GM18951 (cell line): ENCODE measurements at regions of chr6 and their contacts with region 1.

Region 1: DNA sequence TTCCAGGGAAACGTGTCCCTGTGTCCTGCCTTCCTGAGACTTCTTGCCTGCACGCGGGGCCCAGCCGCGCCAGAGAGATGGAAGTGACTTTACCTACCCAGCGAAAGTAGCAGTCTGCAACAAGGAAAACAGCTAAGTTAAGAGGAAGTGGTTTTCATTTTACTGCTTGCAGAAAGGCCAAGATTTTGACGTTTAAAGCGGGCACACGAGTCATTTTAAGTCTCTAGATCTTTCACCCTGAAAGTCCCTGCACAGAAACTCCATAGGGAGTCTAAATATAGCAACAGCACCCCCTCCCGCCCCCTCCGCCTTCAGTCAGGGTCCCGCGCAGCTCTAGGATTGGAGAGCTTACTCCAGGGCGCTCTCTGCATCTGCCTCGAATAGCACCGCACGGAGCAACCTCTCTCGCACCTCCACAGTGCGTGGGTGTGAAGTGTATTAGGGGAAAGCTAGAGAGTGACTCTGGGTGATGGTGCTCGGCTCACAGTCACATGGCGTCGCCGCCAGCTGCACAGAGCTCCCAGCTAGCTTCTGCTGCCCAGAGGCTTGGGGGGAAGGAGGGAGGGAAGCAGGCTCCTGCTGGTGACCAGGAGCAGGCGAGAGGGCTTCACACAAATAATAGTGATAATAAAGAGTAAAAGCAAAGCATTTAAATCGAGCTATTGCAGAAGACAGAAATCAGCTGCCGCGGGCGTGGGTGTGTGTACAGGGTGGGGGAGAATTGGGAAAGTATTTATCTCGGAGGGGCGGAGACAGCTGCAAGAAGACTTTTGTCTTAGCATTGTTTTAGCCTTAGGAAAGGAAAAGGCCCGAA is 1.8 kb upstream of the KCNQ5 start:
- POLR2A ChIP-seq: peak; percentile 46

Region 2: DNA sequence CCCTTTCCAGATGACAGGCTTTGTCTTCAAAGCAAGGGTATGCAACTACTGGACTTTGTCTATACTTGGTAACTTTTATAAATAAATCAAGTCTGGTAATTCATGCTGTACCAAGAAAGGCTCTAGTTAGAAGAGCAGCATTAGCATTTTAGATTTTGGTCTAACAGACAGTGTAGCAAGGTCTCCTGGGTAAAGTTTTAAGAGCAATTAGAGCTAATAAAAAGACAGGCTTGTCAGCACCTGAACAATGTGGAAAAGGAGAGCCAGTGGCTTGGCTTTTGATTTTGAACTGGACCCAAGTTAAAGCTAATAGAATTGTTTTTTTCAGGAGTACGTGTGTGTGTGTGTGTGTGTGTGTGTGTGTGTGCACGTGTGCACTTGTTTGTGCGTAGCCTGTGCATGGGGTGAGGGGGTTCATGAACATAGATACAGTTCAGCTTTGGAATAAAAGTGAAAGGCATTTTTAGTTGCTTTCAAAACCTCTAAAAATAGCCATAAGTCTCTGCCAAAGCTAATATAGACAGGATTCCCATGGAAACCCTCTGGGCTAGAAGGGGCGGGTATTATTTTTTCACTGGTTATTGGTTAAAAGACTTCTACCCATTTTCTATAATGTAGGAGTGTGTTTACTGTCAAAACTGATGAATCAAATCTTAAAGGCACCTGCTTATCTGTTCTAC is 140.2 kb after region 1 on chr6:
- in situ Hi-C with region 1: no loop called
- POLR2A ChIP-seq: no peak

Region 3: GRCh38 chr6:73129653-73130443 is 509.8 kb after region 1 on chr6:
- in situ Hi-C with region 1: loop called (anchors 5 kb)
- POLR2A ChIP-seq: no peak